Motor neuron (in vitro differentiated cells): ENCODE measurements at regions of chr4 and their contacts with region 1.

Region 1: GRCh38 chr4:78864405-78865024 is 74.7 kb downstream of the PAQR3 start:
- ATAC-seq: peak in 3 of 8 experiments; percentile 45 to 80 (median 57)
- H3K4me3 ChIP-seq: no peak overlapping the region
- H3K27ac ChIP-seq: no peak overlapping the region
- H3K4me1 ChIP-seq: no peaks in the 10 kb centered on the region

Region 2: DNA sequence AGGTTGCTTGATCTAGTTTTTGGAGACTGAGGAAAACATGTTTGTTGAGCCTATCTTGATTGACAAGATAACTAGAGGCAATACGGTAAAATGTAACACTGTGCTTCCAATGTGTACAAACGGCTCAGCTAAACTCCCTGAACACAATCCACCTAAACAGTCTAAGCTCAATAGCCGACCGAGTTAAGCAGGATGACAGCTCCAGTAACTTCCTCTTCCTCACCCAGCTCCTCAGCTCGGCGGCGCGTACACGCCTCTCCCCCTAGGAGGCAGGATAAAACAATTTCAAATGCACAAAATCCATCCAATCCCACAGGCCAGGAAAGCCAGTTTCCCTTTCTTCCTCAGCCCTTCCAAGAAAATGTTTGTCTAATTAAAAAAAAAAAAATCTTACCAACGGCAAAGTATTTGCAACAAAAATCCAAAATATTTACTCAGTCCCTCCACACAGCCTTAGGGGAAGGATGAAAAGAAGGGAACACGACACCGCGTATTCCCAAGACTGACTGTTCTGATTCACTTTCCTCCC is 1046.4 kb before region 1 on chr4:
- in situ Hi-C with region 1: no loop called
- ATAC-seq: peak; percentile 48 to 66 (median 54)
- H3K4me3 ChIP-seq: peak overlapping the region; percentile 84 to 100 (median 95)
- H3K27ac ChIP-seq: peak overlapping the region; percentile 86 to 95
- H3K4me1 ChIP-seq: peaks cover 3 to 19% of the 10 kb centered on the region in 2 donors

Region 3: DNA sequence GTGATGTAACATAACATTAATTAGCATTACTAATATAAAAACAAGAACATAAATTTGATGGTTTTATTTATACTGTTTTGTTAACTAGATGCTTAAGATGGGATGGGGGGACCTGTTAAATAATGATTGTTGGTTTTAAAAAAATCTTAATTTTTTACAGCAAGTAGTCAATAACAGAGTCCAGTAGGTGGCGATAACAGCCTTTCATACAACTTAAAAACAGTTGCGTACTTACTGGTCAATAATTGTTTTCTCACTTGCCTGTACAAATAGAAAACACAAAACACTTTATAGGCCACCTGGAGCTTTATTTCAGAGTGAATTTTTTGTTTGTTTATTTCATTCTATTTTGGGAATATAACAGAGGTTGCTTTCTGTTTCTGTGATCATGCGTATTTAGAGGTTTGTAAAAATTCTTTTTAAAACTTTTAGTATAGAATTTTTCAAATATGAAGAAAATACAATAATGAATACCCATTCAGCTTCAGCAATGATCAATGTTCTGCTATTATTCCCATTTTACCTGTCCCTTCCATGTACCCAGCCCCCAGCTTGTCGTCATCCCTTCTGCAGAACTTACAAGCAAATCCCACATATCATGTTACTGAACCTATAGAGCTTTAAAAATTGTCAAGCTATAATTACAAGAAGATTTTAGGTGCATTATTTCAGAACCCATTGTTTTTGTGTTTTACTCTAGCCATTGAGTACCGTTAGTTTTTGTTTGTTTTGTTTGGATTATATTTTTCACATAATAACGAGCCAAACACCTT is 904.8 kb before region 1 on chr4:
- in situ Hi-C with region 1: loop called in 4 of 9 experiments (anchors 10 to 25 kb)
- ATAC-seq: peak in 1 of 8 experiments; percentile 23
- H3K4me3 ChIP-seq: no peak overlapping the region
- H3K27ac ChIP-seq: no peak overlapping the region
- H3K4me1 ChIP-seq: peaks cover 0 to 5% of the 10 kb centered on the region in 2 donors

Region 4: GRCh38 chr4:78612398-78613178 is 251.9 kb before region 1 on chr4:
- in situ Hi-C with region 1: loop called in 5 of 9 experiments (anchors 10 to 25 kb)
- ATAC-seq: peak in 3 of 8 experiments; percentile 32 to 74 (median 33)
- H3K4me3 ChIP-seq: no peak overlapping the region
- H3K27ac ChIP-seq: no peak overlapping the region
- H3K4me1 ChIP-seq: peaks cover 0 to 5% of the 10 kb centered on the region in 2 donors

Region 5: GRCh38 chr4:79385641-79386040 is 521.1 kb after region 1 on chr4:
- in situ Hi-C with region 1: no loop called
- ATAC-seq: peak in 1 of 8 experiments; percentile 25
- H3K4me3 ChIP-seq: no peak overlapping the region
- H3K27ac ChIP-seq: no peak overlapping the region
- H3K4me1 ChIP-seq: no peaks in the 10 kb centered on the region